SK-N-SH (cell line): ENCODE measurements at regions of chr1 and their contacts with region 1.

Region 1: GRCh38 chr1:240149484-240150094 is 57.9 kb downstream of the FMN2 start:
- DNase-seq: peak; percentile 39
- H3K4me3 ChIP-seq: no peak overlapping the region; a peak in 1 of 4 replicates
- H3K27ac ChIP-seq: no peak overlapping the region
- H3K4me1 ChIP-seq: peaks cover 0 to 3% of the 10 kb centered on the region in 2 experiments; a peak in 1 of 4 replicates
- H3K27me3 ChIP-seq: no peaks in the 10 kb centered on the region
- CTCF ChIP-seq: peak; percentile 88
- EP300 ChIP-seq: no peak
- RAD21 ChIP-seq: peak; percentile 63

Region 2: DNA sequence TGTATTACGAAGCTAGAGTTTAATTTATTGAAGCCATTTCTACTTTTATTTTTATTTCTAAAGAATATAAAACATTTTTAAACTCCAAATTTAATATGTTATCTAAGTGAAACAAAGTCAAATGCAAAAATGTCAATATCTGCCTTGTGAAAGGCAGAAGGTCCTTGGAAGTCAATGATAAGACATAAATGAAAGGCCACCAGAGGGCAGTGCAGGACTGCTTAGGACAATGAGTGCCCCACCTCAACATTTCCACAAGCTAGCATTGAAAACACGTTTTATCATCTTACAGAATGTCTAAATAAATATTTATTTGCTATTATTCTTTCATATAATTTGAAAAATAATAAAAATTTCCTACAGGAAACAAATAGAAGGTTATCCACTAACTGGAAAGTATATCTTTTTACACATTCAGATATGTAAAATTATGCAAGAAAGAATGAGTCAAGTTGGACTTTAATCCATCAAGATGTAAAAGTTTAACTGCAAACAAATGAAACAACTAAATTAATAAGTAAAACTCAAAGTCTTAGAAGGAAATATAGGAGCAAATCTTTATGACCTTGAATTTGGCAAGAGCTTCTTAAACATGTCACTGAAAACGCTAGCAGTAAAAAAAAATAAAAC is 198.0 kb before region 1 on chr1:
- CTCF ChIA-PET with region 1: no interaction called
- POLR2A ChIA-PET with region 1: no interaction called
- DNase-seq: peak; percentile 72
- H3K4me3 ChIP-seq: no peak overlapping the region; a peak in 1 of 4 replicates
- H3K27ac ChIP-seq: no peak overlapping the region
- H3K4me1 ChIP-seq: peaks cover 0 to 13% of the 10 kb centered on the region in 2 experiments; a peak in 2 of 4 replicates
- H3K27me3 ChIP-seq: no peaks in the 10 kb centered on the region
- CTCF ChIP-seq: peak; percentile 82
- EP300 ChIP-seq: no peak
- RAD21 ChIP-seq: peak; percentile 96

Region 3: DNA sequence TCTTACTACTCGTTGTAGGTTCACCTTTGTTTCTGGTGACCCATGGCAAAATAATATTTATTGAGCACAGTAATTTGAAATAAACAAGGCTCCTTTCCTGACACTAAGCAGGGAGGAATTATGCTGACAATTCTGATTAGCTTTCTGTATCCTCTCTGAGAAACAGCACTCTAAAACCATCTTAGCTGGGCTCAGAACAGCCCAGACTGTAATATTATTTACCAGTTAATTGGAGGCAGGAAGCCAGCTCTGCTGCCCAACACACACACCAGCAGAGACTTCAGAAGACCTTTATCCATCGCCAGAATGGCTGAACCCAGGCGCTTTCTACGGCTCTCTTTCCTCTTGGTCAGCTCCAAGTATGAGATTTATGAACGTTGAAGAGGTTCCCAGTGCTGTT is 135.5 kb before region 1 on chr1:
- CTCF ChIA-PET with region 1: interaction called, 10 read pairs
- POLR2A ChIA-PET with region 1: no interaction called
- DNase-seq: peak; percentile 45
- H3K4me3 ChIP-seq: peak overlapping the region in 1 of 2 experiments; percentile 30; a peak in 1 of 4 replicates
- H3K27ac ChIP-seq: peak overlapping the region in 1 of 2 experiments; percentile 95; a peak in 2 of 4 replicates
- H3K4me1 ChIP-seq: peaks cover 0 to 14% of the 10 kb centered on the region in 2 experiments; a peak in 2 of 4 replicates
- H3K27me3 ChIP-seq: no peaks in the 10 kb centered on the region
- CTCF ChIP-seq: no peak
- EP300 ChIP-seq: peak in 1 of 2 experiments; percentile 67; a peak in 2 of 4 replicates
- RAD21 ChIP-seq: no peak

Region 4: DNA sequence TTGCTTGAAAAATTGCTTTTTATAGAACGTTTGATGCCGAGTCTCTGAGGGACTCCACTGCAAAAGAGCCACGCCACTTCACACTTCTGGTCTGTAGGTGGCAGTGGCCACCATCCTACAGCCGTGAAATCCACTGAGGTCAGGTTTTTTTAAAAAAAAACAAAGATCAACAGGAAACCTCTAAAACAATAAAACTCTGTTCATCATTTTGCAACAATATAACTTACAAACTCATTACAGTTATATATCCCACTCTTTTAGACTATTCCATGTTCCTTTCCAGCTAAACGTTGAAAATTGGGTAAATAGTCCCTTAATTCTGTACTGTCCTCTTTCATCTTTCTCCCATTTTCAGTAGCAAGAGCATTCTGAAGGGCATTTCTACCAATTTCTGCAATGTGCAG is 122.5 kb before region 1 on chr1:
- CTCF ChIA-PET with region 1: interaction called, 58 read pairs
- POLR2A ChIA-PET with region 1: no interaction called
- DNase-seq: peak; percentile 65
- H3K4me3 ChIP-seq: peak overlapping the region in 1 of 2 experiments; percentile 9; a peak in 1 of 4 replicates
- H3K27ac ChIP-seq: peak overlapping the region in 1 of 2 experiments; percentile 48; a peak in 2 of 4 replicates
- H3K4me1 ChIP-seq: peaks cover 17 to 22% of the 10 kb centered on the region in 2 experiments; a peak in 3 of 4 replicates
- H3K27me3 ChIP-seq: no peaks in the 10 kb centered on the region
- CTCF ChIP-seq: peak; percentile 99
- EP300 ChIP-seq: no peak
- RAD21 ChIP-seq: peak; percentile 94

Region 5: GRCh38 chr1:240092301-240093119 is 57.1 kb before region 1 on chr1:
- CTCF ChIA-PET with region 1: interaction called, 21 read pairs
- POLR2A ChIA-PET with region 1: no interaction called
- DNase-seq: peak; percentile 88
- H3K4me3 ChIP-seq: peak overlapping the region; percentile 89 to 93
- H3K27ac ChIP-seq: peak overlapping the region; percentile 58 to 85
- H3K4me1 ChIP-seq: peaks cover 0 to 40% of the 10 kb centered on the region in 2 experiments; a peak in 2 of 4 replicates
- H3K27me3 ChIP-seq: no peaks in the 10 kb centered on the region
- CTCF ChIP-seq: peak; percentile 51
- EP300 ChIP-seq: no peak
- RAD21 ChIP-seq: no peak

Region 6: GRCh38 chr1:240134596-240134995 is 15.0 kb before region 1 on chr1:
- CTCF ChIA-PET with region 1: interaction called, 25 read pairs
- POLR2A ChIA-PET with region 1: no interaction called
- DNase-seq: no peak
- H3K4me3 ChIP-seq: no peak overlapping the region
- H3K27ac ChIP-seq: peak overlapping the region; percentile 54 to 58; a peak in 2 of 4 replicates
- H3K4me1 ChIP-seq: no peaks in the 10 kb centered on the region; a peak in 1 of 4 replicates
- H3K27me3 ChIP-seq: no peaks in the 10 kb centered on the region
- CTCF ChIP-seq: no peak
- EP300 ChIP-seq: no peak
- RAD21 ChIP-seq: no peak

Region 7: GRCh38 chr1:240169188-240169587 is 19.6 kb after region 1 on chr1:
- CTCF ChIA-PET with region 1: interaction called, 20 read pairs
- POLR2A ChIA-PET with region 1: no interaction called
- DNase-seq: no peak
- H3K4me3 ChIP-seq: no peak overlapping the region
- H3K27ac ChIP-seq: no peak overlapping the region
- H3K4me1 ChIP-seq: no peaks in the 10 kb centered on the region
- H3K27me3 ChIP-seq: no peaks in the 10 kb centered on the region
- CTCF ChIP-seq: peak; percentile 57
- EP300 ChIP-seq: no peak
- RAD21 ChIP-seq: no peak

Region 8: DNA sequence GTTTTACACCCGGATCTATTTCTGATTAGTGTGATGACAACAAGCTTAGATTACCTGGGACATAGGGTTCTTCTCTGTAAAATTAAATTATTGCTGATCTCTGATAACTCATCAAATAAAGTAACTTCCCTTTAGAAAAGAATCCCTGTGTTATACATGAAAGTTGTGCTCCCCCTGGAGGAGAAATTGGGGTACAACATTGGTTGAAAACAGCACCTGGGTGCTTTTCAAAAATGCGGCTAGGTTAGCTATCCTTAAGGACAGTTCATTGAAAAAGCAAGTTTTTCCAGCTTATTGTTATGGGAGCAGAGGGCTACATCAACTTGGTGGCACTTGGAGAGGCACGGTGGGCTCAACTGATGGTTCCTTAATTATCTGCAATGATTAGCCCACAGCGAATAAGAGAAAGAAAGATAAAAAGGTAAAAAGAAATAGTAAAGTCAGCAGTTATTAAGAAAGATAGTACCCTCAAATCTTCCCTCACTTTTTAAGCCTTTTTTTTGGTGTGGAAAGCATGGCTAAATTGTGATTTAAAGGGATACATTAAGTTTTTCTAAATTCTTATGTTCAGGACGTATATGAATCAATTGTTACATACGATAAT is 39.9 kb after region 1 on chr1:
- CTCF ChIA-PET with region 1: interaction called, 11 read pairs
- POLR2A ChIA-PET with region 1: no interaction called
- DNase-seq: peak; percentile 44
- H3K4me3 ChIP-seq: no peak overlapping the region; a peak in 1 of 4 replicates
- H3K27ac ChIP-seq: no peak overlapping the region; a peak in 1 of 4 replicates
- H3K4me1 ChIP-seq: peaks cover 15 to 29% of the 10 kb centered on the region in 2 experiments; a peak in 3 of 4 replicates
- H3K27me3 ChIP-seq: no peaks in the 10 kb centered on the region
- CTCF ChIP-seq: peak; percentile 91
- EP300 ChIP-seq: no peak
- RAD21 ChIP-seq: peak; percentile 74